HepG2 (cell line): ENCODE measurements at regions of chr1 and their contacts with region 1.

Region 1: DNA sequence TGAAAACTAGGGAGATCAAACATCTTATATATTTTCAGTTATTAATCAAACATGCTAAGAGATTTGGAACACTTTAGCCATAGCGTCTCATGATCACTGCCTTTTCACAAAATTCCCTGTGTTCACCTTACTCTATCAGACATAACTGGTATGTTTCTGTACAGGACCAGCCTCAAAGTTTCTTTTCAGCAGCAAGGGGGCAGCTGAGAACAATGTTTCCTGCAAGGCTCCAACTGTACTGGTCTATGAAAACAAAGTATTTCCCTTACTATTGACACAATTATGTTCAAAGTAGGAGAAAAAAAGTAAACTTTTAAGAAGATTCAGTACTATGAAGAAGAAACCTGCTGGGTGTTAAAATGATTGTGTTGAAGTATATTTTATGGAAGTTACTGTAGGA is 98.5 kb downstream of the ATF6 start:
- DNase-seq: peak; percentile 5
- ATAC-seq: peak; percentile 51; the same call in 1 of the 3 replicates
- H3K4me3 ChIP-seq: no peak overlapping the region
- H3K27ac ChIP-seq: no peak overlapping the region
- H3K4me1 ChIP-seq: peaks cover 11% of the 10 kb centered on the region; the same call in 1 of the 2 replicates
- H3K27me3 ChIP-seq: no peaks in the 10 kb centered on the region
- CTCF ChIP-seq: peak; percentile 29
- EP300 ChIP-seq: no peak
- POLR2A ChIP-seq: no peak
- RAD21 ChIP-seq: no peak

Region 2: GRCh38 chr1:161899091-161899490 is 34.5 kb after region 1 on chr1:
- CTCF ChIA-PET with region 1: no interaction called
- POLR2A ChIA-PET with region 1: no interaction called
- in situ Hi-C with region 1: no loop called
- intact Hi-C with region 1: no loop called
- DNase-seq: no peak
- ATAC-seq: no peak
- H3K4me3 ChIP-seq: no peak overlapping the region
- H3K27ac ChIP-seq: no peak overlapping the region
- H3K4me1 ChIP-seq: no peaks in the 10 kb centered on the region
- H3K27me3 ChIP-seq: no peaks in the 10 kb centered on the region
- CTCF ChIP-seq: no peak
- EP300 ChIP-seq: no peak
- POLR2A ChIP-seq: no peak
- RAD21 ChIP-seq: no peak

Region 3: GRCh38 chr1:161913482-161914140 is 49.0 kb after region 1 on chr1:
- CTCF ChIA-PET with region 1: no interaction called
- POLR2A ChIA-PET with region 1: no interaction called
- in situ Hi-C with region 1: no loop called
- intact Hi-C with region 1: loop called (anchors 5 kb)
- DNase-seq: peak; percentile 21
- ATAC-seq: no peak
- H3K4me3 ChIP-seq: no peak overlapping the region
- H3K27ac ChIP-seq: no peak overlapping the region
- H3K4me1 ChIP-seq: peaks cover 27% of the 10 kb centered on the region
- H3K27me3 ChIP-seq: no peaks in the 10 kb centered on the region
- CTCF ChIP-seq: no peak
- EP300 ChIP-seq: peak in 1 of 2 experiments; percentile 11; a peak in 1 of 4 replicates
- POLR2A ChIP-seq: no peak
- RAD21 ChIP-seq: no peak

Region 4: GRCh38 chr1:161946071-161946987 is 81.8 kb after region 1 on chr1:
- CTCF ChIA-PET with region 1: no interaction called
- POLR2A ChIA-PET with region 1: no interaction called
- in situ Hi-C with region 1: no loop called
- intact Hi-C with region 1: loop called (anchors 10 kb)
- DNase-seq: no peak
- ATAC-seq: no peak
- H3K4me3 ChIP-seq: no peak overlapping the region
- H3K27ac ChIP-seq: no peak overlapping the region
- H3K4me1 ChIP-seq: peaks cover 4% of the 10 kb centered on the region; the same call in 1 of the 2 replicates
- H3K27me3 ChIP-seq: no peaks in the 10 kb centered on the region
- CTCF ChIP-seq: no peak
- EP300 ChIP-seq: no peak
- POLR2A ChIP-seq: no peak
- RAD21 ChIP-seq: no peak